ENCODE measurements at regions of chr2 and their contacts with region 1.

Region 1: DNA sequence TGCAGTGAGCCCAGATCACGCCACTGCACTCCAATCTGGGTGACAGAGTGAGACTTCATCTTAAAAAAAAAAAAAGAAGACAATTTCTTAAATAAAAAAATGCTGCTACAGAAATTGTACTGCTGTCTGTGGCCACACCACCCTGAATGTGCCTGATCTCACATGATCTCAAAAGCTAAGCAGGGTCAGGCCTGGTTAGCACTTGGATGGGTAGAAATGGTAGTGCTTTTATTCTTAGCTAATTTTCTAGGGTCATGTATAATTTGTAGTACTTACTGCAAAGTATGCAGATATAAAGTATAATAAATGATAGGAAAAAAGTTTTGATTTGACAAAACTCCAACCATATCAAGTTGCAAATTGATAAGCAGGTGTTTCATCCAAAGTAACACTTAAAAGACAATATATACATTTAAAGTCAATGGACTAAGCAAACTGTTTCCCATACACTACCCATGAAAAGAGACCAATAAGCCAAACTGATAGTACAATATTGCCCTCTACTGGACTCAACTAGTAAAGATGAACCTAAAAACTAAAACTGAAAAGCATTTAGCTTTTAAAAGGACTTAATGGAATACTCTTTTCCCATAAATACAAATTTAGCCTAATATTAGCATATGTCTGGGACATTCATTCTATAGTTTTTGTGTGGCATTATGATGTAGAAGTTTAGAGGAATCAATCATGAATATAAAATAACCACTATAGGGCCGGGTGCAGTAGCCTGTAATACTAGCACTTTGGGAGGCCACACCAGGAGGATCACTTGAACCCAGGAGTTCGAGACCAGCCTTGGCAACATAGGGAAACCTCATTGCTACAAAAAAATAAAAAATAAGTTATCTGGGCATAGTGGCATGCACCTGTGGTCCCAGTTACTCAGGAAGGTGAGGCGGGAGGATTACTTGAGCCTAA is 18.6 kb upstream of the PEX13 start:
- DNase-seq: no peak
- H3K4me3 ChIP-seq: no peak overlapping the region
- CTCF ChIP-seq: no peak
- POLR2A ChIP-seq: no peak

Region 2: DNA sequence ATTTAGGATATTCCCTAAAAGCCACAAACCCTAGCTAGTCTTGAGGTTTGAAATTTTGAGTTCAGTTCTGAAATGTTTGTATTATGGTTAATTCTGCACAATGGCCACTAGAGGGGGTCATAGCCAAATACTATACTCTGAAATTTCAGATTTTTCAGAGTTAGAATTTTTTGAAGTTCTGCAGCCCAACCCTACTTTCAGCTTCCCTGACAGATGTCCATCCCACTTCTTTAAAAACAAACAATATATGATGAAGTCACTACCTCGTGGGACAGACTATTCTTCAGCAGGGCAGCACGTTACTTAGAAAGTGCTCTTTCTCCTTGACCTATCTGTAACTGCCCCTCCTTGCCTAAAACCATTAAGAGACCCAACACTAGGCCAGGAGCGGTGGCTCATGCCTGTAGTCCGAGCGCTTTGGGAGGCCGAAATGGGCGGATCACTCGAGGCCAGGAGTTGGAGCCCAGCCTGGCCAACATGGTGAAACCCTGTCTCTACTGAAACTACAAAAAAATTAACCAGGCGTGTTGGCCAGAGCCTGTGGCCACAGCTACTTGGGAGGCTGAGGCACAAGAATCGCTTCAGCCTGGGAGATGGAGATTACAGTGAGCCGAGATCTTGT is 291.0 kb before region 1 on chr2:
- intact Hi-C with region 1: loop called (anchors 10 kb)
- DNase-seq: no peak
- H3K4me3 ChIP-seq: no peak overlapping the region
- CTCF ChIP-seq: no peak
- POLR2A ChIP-seq: no peak

Region 3: DNA sequence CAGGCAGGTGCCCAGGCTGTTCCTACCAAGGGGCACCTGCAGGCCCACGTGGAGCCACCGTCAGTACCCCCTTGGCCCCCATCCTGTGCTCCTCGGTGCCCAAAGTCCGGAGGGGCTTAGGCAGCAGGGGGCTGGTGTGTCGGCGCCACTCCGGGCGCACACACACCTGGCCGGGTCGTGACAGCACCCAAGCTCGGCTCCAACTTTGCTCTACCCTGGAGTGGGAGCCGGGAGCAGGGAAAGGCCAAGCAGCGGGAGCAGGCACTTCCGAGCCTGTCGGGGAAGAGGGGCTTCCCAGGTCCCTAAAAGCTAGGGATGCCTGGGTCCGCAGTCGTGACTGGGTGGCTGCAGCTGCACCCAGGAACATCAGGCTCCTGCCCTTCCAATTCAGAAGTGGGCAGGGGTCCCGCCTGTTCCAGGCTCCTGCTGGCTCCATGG is 194.5 kb before region 1 on chr2:
- intact Hi-C with region 1: loop called (anchors 5 kb)
- DNase-seq: peak in 1 of 2 donors; percentile 53
- H3K4me3 ChIP-seq: no peak overlapping the region
- CTCF ChIP-seq: no peak
- POLR2A ChIP-seq: no peak

Measured in lower leg skin (tissue), 4 donors.